ENCODE measurements at regions of chr12 and their contacts with region 1.

Region 1: DNA sequence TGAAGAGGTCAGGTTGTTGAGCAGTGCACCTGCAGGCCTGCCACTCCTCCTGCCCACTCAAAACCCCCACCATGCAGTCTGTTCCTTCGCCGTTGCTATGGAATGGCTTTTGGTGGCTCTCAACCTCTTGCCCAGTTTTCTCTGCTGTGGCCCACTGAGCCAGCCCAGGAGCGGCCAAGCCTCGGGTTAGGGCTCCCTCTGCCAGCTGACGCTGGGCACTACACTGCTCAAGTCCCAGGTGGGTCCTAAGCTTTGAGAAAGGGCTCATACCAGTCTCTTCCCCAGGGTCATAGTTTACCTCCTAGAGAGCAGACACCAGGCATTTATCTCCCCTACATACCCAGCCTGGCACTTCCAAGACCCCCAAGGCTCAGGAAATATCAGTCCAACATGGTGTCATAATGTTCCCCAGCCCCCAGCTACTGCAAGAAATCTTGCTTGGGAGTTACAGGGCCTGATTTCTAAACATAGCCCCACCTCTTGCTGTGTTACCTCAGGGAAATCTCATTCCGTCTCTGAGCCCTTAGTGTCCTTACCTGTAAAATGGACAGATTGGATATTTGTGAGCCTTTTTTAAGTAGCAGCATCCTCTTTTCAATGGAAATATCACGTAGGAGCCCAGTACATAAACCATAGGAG is 59.4 kb downstream of the TSPAN11 start:
- DNase-seq: peak; percentile 68 to 80
- H3K4me3 ChIP-seq: no peak overlapping the region
- H3K4me3 Mint-ChIP-seq: no peak overlapping the region
- H3K27ac Mint-ChIP-seq: no peak overlapping the region
- H3K4me1 ChIP-seq: no peaks in the 10 kb centered on the region
- H3K4me1 Mint-ChIP-seq: no peaks in the 10 kb centered on the region
- H3K27me3 ChIP-seq: no peaks in the 10 kb centered on the region
- H3K27me3 Mint-ChIP-seq: no peaks in the 10 kb centered on the region
- CTCF ChIP-seq: peak; percentile 91 to 95

Region 2: DNA sequence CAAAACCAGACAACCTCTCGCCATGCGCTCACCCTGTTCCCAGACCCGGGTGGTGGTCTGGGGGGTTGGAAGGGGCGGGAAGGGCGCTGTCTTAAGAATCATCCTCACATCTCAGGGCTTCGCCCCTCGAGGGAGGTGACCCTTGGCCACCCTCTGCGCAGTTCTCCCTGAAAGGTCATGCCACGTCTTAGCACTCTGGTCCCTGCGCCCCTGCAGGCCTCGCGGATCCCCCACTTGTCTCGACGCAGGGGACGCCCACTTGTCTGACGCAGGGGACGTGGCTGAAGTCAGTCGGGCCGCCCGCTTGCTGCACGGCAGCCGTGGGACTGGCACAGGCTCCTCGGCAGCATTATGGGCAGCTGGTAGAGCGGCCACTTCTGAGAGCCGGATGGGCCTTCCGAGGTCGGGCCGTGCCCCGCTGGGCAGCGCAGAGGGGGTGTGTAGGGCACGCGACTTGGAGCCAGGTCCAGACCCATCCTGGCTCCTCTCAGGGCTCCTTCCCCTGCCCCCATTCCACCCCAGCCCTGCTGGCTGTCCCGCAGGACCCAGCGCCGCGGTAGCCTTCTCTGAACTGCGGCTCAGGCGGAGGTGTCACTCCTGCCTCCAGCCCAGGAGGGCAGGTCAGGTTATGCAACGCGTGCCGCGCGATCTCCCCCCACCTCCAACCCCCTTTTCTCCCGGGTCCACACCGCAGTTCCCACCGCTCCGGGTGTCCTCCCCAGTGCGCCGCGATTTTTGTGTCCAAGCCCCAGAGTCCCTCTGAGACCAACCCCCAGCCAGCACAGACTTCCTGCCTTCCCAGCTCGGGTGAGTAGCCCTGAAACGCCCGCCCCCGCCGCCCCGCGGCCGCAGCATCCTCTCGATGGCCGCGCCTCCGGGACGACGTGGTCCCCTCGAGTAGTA is 190.3 kb before region 1 on chr12:
- CTCF ChIA-PET with region 1: no interaction called
- POLR2A ChIA-PET with region 1: no interaction called
- intact Hi-C with region 1: no loop called
- DNase-seq: peak; percentile 75 to 76
- H3K4me3 ChIP-seq: peak overlapping the region; percentile 75
- H3K4me3 Mint-ChIP-seq: peak overlapping the region; percentile 80
- H3K27ac Mint-ChIP-seq: no peak overlapping the region
- H3K4me1 ChIP-seq: peaks cover 34% of the 10 kb centered on the region
- H3K4me1 Mint-ChIP-seq: peaks cover 25% of the 10 kb centered on the region
- H3K27me3 ChIP-seq: no peaks in the 10 kb centered on the region
- H3K27me3 Mint-ChIP-seq: peaks cover 3% of the 10 kb centered on the region
- CTCF ChIP-seq: no peak

Region 3: GRCh38 chr12:30908722-30909348 is 77.1 kb before region 1 on chr12:
- CTCF ChIA-PET with region 1: no interaction called
- POLR2A ChIA-PET with region 1: no interaction called
- intact Hi-C with region 1: no loop called
- DNase-seq: no peak
- H3K4me3 ChIP-seq: no peak overlapping the region
- H3K4me3 Mint-ChIP-seq: no peak overlapping the region
- H3K27ac Mint-ChIP-seq: no peak overlapping the region
- H3K4me1 ChIP-seq: no peaks in the 10 kb centered on the region
- H3K4me1 Mint-ChIP-seq: no peaks in the 10 kb centered on the region
- H3K27me3 ChIP-seq: no peaks in the 10 kb centered on the region
- H3K27me3 Mint-ChIP-seq: peaks cover 16% of the 10 kb centered on the region
- CTCF ChIP-seq: no peak

Region 4: DNA sequence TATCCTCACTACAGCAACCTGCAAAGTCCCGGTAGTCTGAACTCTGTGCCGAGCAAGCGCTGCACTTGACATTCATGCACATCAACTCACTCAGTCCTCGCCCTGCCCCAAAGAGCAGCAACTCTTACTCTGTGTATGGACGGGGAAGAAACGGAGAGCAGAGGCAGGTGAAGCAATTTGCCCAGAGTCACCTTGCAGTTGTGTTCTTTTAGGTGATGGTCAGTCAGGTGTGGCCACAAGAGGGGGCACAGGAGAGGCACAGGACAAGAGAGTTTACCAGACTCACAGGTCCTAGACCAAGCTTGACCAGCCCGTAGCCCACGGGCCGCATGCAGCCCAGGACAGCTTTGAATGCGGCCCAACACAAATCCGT is 20.3 kb before region 1 on chr12:
- CTCF ChIA-PET with region 1: interaction called, 16 read pairs
- POLR2A ChIA-PET with region 1: no interaction called
- intact Hi-C with region 1: loop called (anchors 1 kb)
- DNase-seq: peak; percentile 77 to 80
- H3K4me3 ChIP-seq: no peak overlapping the region
- H3K4me3 Mint-ChIP-seq: no peak overlapping the region
- H3K27ac Mint-ChIP-seq: no peak overlapping the region
- H3K4me1 ChIP-seq: peaks cover 7% of the 10 kb centered on the region; the same call in 1 of the 2 replicates
- H3K4me1 Mint-ChIP-seq: peaks cover 6% of the 10 kb centered on the region
- H3K27me3 ChIP-seq: no peaks in the 10 kb centered on the region; the same call in 1 of the 2 replicates
- H3K27me3 Mint-ChIP-seq: peaks cover 26% of the 10 kb centered on the region
- CTCF ChIP-seq: peak; percentile 81 to 87

Region 5: DNA sequence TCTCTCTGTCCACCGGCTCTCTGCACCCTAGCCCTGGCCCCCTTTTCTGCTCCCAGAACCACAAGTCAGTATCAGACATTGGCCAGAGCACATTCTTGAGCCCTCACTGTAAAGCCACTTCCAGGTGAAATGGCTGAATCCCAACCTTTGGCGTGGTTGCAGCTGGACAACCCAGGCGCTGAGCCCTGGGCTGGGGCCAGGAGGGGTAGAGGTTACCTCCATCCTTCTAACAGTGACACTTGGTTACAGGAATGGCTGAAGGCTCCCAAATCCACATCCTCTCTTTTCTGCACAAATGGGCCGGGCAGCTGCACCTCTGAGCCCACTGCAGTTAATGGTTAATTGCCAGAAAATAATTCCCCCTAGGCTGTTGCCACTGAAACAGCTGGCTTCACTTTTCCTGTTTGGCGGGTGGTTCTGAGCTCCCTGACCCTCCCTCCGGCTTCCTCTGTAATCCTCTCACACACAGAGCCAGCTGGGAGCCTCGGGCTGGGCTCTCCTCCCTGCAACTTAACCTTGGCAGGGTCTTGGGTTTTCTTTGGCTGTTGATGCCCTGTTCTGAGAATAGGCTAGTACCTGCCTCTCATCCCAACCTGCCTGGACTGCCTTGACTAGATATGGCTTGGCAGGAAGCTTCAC is 15.3 kb before region 1 on chr12:
- CTCF ChIA-PET with region 1: interaction called, 16 read pairs
- POLR2A ChIA-PET with region 1: no interaction called
- intact Hi-C with region 1: loop called (anchors 1 kb)
- DNase-seq: peak; percentile 71 to 79
- H3K4me3 ChIP-seq: no peak overlapping the region
- H3K4me3 Mint-ChIP-seq: no peak overlapping the region
- H3K27ac Mint-ChIP-seq: peak overlapping the region; percentile 65
- H3K4me1 ChIP-seq: peaks cover 13% of the 10 kb centered on the region; the same call in 1 of the 2 replicates
- H3K4me1 Mint-ChIP-seq: peaks cover 11% of the 10 kb centered on the region
- H3K27me3 ChIP-seq: no peaks in the 10 kb centered on the region; the same call in 1 of the 2 replicates
- H3K27me3 Mint-ChIP-seq: peaks cover 28% of the 10 kb centered on the region
- CTCF ChIP-seq: no peak

Measured in Caco-2 (cell line).